ENCODE measurements at regions of chr19 and their contacts with region 1.

Region 1: GRCh38 chr19:41726493-41726892 is 18.1 kb downstream of the CEACAM5 start:
- DNase-seq: no peak
- H3K4me3 ChIP-seq: no peak overlapping the region
- H3K27ac ChIP-seq: no peak overlapping the region
- H3K27me3 ChIP-seq: peaks cover 0 to 50% (median 18%) of the 10 kb centered on the region in 45 donors
- CTCF ChIP-seq: peak in 1 of 56 donors; percentile 6

Region 2: GRCh38 chr19:41016488-41017071 is 709.9 kb before region 1 on chr19:
- intact Hi-C with region 1: loop called in 1 of 2 experiments (anchors 5 kb)
- DNase-seq: no peak
- H3K4me3 ChIP-seq: no peak overlapping the region
- H3K27ac ChIP-seq: no peak overlapping the region
- H3K27me3 ChIP-seq: peaks cover 0 to 25% (median 8%) of the 10 kb centered on the region in 45 donors
- CTCF ChIP-seq: no peak